ENCODE measurements at regions of chr1 and their contacts with region 1.

Region 1: GRCh38 chr1:235079443-235080296 is 49.0 kb downstream of the TOMM20 start:
- DNase-seq: peak; percentile 64 to 82
- H3K4me3 ChIP-seq: no peak overlapping the region
- H3K27ac ChIP-seq: peak overlapping the region; percentile 85 to 86
- H3K4me1 ChIP-seq: peaks cover 13 to 22% of the 10 kb centered on the region in 2 donors
- H3K27me3 ChIP-seq: no peaks in the 10 kb centered on the region
- CTCF ChIP-seq: peak in 1 of 3 donors; percentile 13
- POLR2A ChIP-seq: peak; percentile 15

Region 2: GRCh38 chr1:234499119-234499942 is 580.3 kb before region 1 on chr1:
- intact Hi-C with region 1: loop called (anchors 5 kb)
- DNase-seq: peak; percentile 86 to 93
- H3K4me3 ChIP-seq: peak overlapping the region; percentile 18 to 55 (median 34)
- H3K27ac ChIP-seq: peak overlapping the region; percentile 86 to 89
- H3K4me1 ChIP-seq: peaks cover 3 to 12% of the 10 kb centered on the region in 2 donors
- H3K27me3 ChIP-seq: no peaks in the 10 kb centered on the region
- CTCF ChIP-seq: peak; percentile 96 to 98 (median 98)
- POLR2A ChIP-seq: no peak

Region 3: GRCh38 chr1:234608025-234608862 is 471.4 kb before region 1 on chr1:
- intact Hi-C with region 1: loop called (anchors 5 kb)
- DNase-seq: peak; percentile 79 to 91
- H3K4me3 ChIP-seq: peak overlapping the region; percentile 77 to 90 (median 80)
- H3K27ac ChIP-seq: peak overlapping the region; percentile 98 to 99
- H3K4me1 ChIP-seq: peaks cover 5 to 10% of the 10 kb centered on the region in 2 donors
- H3K27me3 ChIP-seq: no peaks in the 10 kb centered on the region
- CTCF ChIP-seq: peak in 1 of 3 donors; percentile 38
- POLR2A ChIP-seq: no peak

Region 4: GRCh38 chr1:235156265-235156664 is 76.6 kb after region 1 on chr1:
- intact Hi-C with region 1: no loop called
- DNase-seq: no peak
- H3K4me3 ChIP-seq: no peak overlapping the region
- H3K27ac ChIP-seq: no peak overlapping the region
- H3K4me1 ChIP-seq: no peaks in the 10 kb centered on the region
- H3K27me3 ChIP-seq: no peaks in the 10 kb centered on the region
- CTCF ChIP-seq: no peak
- POLR2A ChIP-seq: no peak

Region 5: DNA sequence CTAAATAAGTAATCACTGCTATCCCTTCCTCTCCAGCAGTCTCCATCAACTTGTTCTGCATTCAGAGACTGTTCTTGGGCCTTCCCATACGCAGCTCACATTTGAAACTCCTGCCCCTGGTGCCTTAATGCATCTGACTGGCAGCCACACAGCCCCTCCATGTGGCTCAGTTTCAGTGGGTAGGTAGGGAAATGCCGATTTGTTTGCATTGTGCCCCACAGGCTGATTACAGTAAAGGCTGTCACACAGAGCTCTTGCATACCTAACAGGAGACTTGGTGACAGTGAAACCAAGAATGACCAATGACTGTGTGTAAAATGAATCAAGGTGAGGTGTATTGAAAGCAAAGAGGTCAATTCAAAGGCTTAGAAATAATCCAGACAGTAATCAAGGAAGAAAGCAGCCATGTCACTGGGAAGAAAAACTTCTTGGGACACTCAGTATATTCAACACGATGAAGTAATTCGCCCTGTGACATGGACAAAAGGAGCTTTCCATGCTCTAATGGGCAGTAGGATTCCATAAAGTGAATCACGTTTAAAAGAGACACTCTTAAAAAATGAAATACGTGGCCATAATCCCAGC is 437.3 kb after region 1 on chr1:
- intact Hi-C with region 1: no loop called
- DNase-seq: no peak
- H3K4me3 ChIP-seq: no peak overlapping the region
- H3K27ac ChIP-seq: no peak overlapping the region
- H3K4me1 ChIP-seq: no peaks in the 10 kb centered on the region
- H3K27me3 ChIP-seq: no peaks in the 10 kb centered on the region
- CTCF ChIP-seq: no peak
- POLR2A ChIP-seq: no peak

Measured in breast epithelium (tissue), 4 donors.